HEK293T (cell line): ENCODE measurements at regions of chr5 and their contacts with region 1.

Region 1: DNA sequence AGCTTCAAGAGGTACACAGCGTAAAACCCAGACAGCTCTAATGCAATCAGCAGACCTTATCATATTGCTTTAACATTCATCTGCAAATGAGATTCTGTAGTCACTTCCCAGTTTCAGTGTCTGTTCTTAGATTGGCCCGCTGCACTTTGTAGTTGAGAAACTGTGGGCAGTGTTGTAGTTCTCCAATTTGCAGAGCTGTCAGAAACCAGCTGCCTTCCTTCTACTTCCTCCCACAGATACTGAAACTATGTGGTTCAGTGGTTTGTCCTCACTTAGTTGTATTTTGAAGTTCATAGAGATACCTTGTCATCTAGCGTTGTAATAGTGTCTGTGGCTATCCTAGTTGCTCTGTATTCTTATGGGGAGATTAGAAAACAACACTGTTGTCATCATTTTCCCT is 39.6 kb upstream of the TRIM36 start:
- DNase-seq: no peak

Region 2: DNA sequence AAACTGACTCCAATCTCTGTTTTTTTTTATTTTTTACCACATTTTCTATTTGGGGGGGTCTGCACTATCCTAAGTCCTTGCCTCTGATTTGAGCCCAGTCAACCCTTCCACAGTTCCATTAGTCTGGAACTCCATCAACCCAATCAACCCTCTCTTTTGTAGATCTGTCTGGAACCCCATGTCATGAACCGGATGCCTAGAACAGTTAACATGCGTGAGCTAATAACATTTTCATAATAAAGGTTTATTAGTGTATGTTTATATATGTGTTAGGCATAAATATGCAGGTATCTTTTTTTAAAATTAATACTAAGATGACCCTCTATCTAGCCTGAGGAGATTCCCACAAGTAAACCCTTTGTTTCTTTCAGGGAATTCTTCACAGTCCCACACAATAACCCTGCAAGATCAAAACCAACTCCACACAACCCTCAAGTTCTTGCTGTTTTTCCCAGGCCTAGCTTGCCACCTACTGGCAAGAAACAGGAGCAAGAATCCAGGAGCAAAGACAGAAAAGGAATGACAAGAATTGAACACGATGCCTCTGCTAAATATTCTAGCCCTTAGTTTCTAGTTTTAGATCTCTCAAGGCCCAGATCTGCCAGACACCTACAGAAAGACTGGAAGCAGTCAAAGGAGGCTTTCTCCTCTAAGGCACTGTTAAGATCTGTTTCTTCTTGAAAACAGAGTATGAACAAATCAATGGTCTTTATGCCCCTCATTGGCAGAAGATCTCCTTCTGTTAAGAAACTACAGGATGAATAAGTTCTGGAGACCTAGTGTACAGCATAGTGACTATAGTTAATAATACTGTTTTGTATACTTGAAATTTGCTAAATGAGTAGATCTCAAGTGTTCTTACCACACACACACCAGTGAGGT is 140.0 kb before region 1 on chr5:
- CTCF ChIA-PET with region 1: interaction called, 10 read pairs
- POLR2A ChIA-PET with region 1: no interaction called
- DNase-seq: peak; percentile 47